Prostate gland (tissue), 2 donors: ENCODE measurements at regions of chr4 and their contacts with region 1.

Region 1: DNA sequence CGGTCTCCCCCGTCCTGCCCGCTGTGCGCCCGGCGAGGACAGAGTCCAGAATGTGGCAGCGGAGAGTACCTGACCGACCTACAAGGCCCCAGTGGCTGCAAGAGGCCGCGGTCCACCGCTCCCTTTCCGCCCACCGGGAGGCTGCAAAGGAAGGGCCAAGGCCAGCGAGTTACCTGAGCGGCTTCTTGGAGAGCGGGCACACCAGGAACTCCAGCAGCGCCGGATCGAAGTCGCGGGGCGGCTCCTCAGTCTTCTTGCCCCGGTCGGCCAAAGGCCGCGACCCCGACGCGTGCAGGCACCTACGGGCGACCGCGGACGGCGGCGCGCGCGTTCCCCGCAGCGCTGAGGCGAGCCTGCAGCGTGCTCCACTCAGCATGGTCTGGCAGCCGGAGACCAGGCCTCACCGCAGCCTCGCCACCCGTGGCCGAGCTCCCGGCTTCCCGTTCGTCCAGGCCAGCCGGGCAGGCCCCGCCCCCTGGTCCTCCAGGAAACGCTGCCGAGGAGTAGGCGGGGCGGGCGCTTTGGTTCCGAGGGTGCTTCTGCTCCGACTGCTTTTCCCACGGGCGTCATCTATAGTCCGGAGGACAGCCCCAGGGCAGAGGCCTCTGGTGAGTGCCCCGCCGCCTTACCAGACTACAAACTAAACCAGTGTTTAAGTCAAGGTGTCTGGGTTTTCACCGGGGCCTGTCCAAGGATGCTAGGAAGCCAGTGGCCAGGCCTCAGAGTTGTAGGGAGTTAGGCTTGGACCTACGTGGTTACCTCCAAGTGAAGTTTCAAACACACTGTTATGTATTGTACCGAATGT is at the start of gene PYURF:
- DNase-seq: peak; percentile 93
- H3K4me3 ChIP-seq: peak within 1 kb of the TSS; percentile 77 to 85
- H3K27ac ChIP-seq: peak within 1 kb of the TSS; percentile 89
- H3K4me1 ChIP-seq: peaks cover 6% of the 10 kb centered on the region
- H3K27me3 ChIP-seq: no peaks in the 10 kb centered on the region
- CTCF ChIP-seq: peak in 1 of 4 experiments; percentile 27
- POLR2A ChIP-seq: peak; percentile 94
- total RNA-seq, gene PYURF: 84.5 to 133 TPM

Region 2: DNA sequence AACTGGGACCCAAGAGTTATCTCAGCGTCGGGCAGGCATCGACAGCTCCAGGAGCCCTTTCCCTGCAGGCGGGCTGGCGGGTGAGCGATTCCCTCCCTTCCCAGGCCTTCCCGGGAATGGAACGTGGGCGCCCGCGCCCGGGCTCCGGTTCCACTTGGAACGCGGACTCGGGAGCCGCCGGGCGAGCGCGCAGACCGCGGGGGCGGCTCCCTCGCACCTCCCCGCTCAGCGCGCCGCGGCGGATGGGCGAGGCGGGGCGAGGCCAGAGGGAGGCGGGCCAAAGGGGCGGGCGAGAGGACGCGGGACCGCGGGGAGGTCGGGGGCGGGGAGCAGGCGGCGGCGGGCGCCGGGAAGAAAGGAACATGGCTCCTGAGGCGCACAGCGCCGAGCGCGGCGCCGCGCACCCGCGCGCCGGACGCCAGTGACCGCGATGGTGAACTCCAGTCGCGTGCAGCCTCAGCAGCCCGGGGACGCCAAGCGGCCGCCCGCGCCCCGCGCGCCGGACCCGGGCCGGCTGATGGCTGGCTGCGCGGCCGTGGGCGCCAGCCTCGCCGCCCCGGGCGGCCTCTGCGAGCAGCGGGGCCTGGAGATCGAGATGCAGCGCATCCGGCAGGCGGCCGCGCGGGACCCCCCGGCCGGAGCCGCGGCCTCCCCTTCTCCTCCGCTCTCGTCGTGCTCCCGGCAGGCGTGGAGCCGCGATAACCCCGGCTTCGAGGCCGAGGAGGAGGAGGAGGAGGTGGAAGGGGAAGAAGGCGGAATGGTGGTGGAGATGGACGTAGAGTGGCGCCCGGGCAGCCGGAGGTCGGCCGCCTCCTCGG is 516.0 kb before region 1 on chr4 and contains the start of gene PKD2:
- intact Hi-C with region 1: loop called (anchors 10 kb)
- DNase-seq: peak; percentile 76
- H3K4me3 ChIP-seq: peak within 1 kb of the TSS; percentile 72 to 86
- H3K27ac ChIP-seq: peak within 1 kb of the TSS; percentile 80 to 81
- H3K4me1 ChIP-seq: no peaks in the 10 kb centered on the region
- H3K27me3 ChIP-seq: no peaks in the 10 kb centered on the region
- CTCF ChIP-seq: no peak
- POLR2A ChIP-seq: peak; percentile 68
- total RNA-seq, gene PKD2: 19.0 to 40.3 TPM

Region 3: GRCh38 chr4:88591787-88592599 is 68.5 kb after region 1 on chr4 and contains the start of gene HERC3:
- intact Hi-C with region 1: loop called (anchors 5 kb)
- DNase-seq: peak; percentile 91
- H3K4me3 ChIP-seq: peak within 1 kb of the TSS; percentile 87 to 99
- H3K27ac ChIP-seq: peak within 1 kb of the TSS; percentile 95 to 96
- H3K4me1 ChIP-seq: peaks cover 5% of the 10 kb centered on the region
- H3K27me3 ChIP-seq: no peaks in the 10 kb centered on the region
- CTCF ChIP-seq: peak in 2 of 4 experiments; percentile 26 to 52
- POLR2A ChIP-seq: peak; percentile 78
- total RNA-seq, gene HERC3: 36.5 to 42.2 TPM

Region 4: GRCh38 chr4:89558147-89558546 is 1034.6 kb after region 1 on chr4:
- intact Hi-C with region 1: no loop called
- DNase-seq: no peak
- H3K4me3 ChIP-seq: no peak overlapping the region
- H3K27ac ChIP-seq: no peak overlapping the region
- H3K4me1 ChIP-seq: no peaks in the 10 kb centered on the region
- H3K27me3 ChIP-seq: no peaks in the 10 kb centered on the region
- CTCF ChIP-seq: peak in 1 of 4 experiments; percentile 8
- POLR2A ChIP-seq: no peak